Prostate gland (tissue), 2 donors: ENCODE measurements at regions of chr6 and their contacts with region 1.

Region 1: GRCh38 chr6:90296346-90297114 is at the start of gene BACH2:
- DNase-seq: peak; percentile 95
- H3K4me3 ChIP-seq: peak within 1 kb of the TSS; percentile 77 to 89
- H3K27ac ChIP-seq: peak within 1 kb of the TSS; percentile 88 to 92
- H3K4me1 ChIP-seq: no peaks in the 10 kb centered on the region
- H3K27me3 ChIP-seq: no peaks in the 10 kb centered on the region
- CTCF ChIP-seq: peak in 2 of 4 experiments; percentile 23 to 54
- POLR2A ChIP-seq: peak; percentile 73
- total RNA-seq, gene BACH2: 5.2 to 5.7 TPM

Region 2: DNA sequence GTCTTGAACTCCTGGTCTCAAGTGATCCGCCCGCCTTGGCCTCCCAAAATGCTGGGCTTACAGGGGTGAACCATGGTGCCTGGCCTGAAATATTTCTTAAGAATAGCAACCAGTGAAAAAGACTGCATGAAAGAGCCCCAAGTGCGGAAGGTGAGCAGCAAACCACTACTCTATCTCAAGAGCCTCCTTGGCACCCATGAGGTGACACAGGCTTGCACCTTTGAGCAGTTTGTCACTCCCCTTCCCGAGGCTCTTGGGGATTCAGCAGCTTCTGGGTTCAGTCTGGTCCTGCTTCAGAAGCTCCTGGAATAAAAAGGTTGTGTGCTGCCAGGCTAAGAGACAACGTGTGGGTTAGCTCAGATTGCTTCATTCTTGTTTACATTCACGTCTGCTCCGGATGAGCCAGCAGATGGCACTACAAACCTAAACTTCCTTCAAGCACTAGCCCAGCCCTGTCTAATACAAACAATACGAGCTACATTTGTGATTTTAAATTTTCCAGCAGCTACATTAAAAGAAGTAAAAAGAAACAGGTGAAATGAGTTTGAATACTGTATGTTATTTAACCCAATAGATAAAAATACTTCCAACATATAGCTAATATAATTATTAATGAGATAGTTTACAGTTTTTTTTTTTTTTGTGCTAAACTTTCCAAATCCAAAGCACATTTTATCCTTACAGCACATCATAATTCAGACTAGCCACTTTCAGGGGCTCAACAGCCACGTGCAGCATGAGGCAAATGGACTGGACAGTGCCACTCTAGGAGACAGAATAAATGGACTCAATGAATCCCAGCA is 356.1 kb before region 1 on chr6:
- intact Hi-C with region 1: loop called (anchors 10 kb)
- DNase-seq: peak; percentile 90
- H3K4me3 ChIP-seq: no peak overlapping the region
- H3K27ac ChIP-seq: peak overlapping the region; percentile 77 to 82
- H3K4me1 ChIP-seq: peaks cover 8% of the 10 kb centered on the region
- H3K27me3 ChIP-seq: no peaks in the 10 kb centered on the region
- CTCF ChIP-seq: peak; percentile 26 to 87 (median 74)
- POLR2A ChIP-seq: no peak

Region 3: DNA sequence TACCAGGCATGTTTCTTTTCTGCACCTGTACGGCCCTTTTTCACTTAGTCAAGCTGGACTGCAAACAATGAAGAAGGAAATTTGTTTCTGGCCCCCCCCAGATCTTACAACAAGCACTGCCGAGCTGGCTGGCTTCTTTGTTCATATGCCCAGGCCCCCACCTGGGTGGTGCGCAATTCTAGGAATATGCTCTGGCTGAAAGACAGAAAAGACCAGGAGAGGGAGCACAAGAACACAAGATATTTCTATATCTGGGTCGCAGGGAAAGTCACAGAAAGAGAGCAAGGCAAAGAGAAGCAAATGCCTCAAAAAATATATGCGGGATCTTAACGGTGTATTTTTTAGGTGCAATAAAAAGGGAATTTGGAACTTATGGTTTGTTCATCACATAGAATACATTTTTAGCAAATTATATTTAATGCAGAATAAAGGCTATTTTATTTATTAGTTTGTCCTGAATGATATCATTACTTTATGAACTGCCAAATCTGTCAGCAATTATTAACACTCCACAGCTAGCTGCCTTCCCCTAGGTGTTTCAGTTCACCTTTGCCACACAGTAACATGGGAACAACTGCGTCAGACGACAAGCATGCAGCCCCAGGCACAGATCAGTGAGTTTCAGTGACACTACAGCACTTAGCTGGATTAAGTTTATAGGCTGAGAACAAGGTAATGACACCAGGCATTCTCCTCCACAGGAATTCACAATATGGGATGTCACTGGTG is 325.8 kb before region 1 on chr6:
- intact Hi-C with region 1: loop called (anchors 2 kb)
- DNase-seq: peak; percentile 40
- H3K4me3 ChIP-seq: no peak overlapping the region
- H3K27ac ChIP-seq: no peak overlapping the region
- H3K4me1 ChIP-seq: no peaks in the 10 kb centered on the region
- H3K27me3 ChIP-seq: no peaks in the 10 kb centered on the region
- CTCF ChIP-seq: peak in 3 of 4 experiments; percentile 48 to 75 (median 73)
- POLR2A ChIP-seq: no peak

Region 4: GRCh38 chr6:90098001-90098531 is 198.5 kb before region 1 on chr6:
- intact Hi-C with region 1: loop called (anchors 5 kb)
- DNase-seq: peak; percentile 75
- H3K4me3 ChIP-seq: no peak overlapping the region
- H3K27ac ChIP-seq: peak overlapping the region; percentile 48 to 67
- H3K4me1 ChIP-seq: no peaks in the 10 kb centered on the region
- H3K27me3 ChIP-seq: no peaks in the 10 kb centered on the region
- CTCF ChIP-seq: peak in 3 of 4 experiments; percentile 15 to 46 (median 43)
- POLR2A ChIP-seq: no peak

Region 5: DNA sequence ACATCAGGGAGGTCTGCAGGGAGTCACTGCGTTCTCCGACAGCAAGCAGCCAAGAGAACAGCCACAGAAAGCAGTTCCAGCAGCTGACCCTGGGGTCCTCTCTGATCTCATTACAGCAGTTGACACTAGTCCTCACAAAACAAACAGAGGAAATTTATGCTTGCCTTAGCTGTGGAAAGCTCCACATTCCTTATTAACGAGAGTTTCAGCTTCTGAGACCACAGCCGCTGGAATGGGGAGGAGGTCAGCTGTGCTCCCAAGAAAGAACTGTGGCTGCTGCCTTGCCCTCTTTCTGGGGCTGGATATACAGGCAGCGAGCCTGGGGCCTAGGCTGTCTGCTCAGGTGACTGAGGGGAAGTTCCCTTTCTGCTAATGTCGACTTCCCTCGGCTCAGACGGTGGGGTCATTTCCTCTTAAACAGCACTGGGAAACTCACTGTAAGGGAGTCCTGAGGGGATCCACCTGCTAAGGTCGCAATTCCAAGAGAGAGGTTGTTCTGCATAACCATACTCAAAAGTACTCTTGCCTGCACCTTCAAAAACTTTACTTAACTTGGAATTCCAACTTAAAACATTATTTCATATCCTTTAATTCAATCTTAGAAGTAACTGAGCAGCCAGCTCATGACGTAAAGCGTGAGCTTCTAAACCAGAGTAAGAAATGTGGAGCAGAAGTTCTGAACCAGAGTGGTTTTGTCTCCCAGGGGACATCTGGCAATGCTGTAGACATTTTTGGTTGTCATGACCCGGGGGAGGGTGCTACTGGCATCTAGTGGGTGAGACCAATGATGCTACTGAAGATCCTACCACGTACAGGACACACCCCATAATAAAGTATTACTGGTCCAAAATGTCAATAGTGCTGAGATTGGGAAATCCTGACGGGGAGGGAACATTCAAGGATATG is 80.2 kb before region 1 on chr6:
- intact Hi-C with region 1: loop called (anchors 5 kb)
- DNase-seq: no peak
- H3K4me3 ChIP-seq: no peak overlapping the region
- H3K27ac ChIP-seq: peak overlapping the region; percentile 61 to 94
- H3K4me1 ChIP-seq: peaks cover 19% of the 10 kb centered on the region
- H3K27me3 ChIP-seq: no peaks in the 10 kb centered on the region
- CTCF ChIP-seq: no peak
- POLR2A ChIP-seq: no peak

Region 6: GRCh38 chr6:90369024-90369519 is 72.5 kb after region 1 on chr6:
- intact Hi-C with region 1: loop called (anchors 5 kb)
- DNase-seq: peak; percentile 91
- H3K4me3 ChIP-seq: no peak overlapping the region
- H3K27ac ChIP-seq: peak overlapping the region; percentile 74 to 76
- H3K4me1 ChIP-seq: no peaks in the 10 kb centered on the region
- H3K27me3 ChIP-seq: no peaks in the 10 kb centered on the region
- CTCF ChIP-seq: no peak
- POLR2A ChIP-seq: no peak

Region 7: DNA sequence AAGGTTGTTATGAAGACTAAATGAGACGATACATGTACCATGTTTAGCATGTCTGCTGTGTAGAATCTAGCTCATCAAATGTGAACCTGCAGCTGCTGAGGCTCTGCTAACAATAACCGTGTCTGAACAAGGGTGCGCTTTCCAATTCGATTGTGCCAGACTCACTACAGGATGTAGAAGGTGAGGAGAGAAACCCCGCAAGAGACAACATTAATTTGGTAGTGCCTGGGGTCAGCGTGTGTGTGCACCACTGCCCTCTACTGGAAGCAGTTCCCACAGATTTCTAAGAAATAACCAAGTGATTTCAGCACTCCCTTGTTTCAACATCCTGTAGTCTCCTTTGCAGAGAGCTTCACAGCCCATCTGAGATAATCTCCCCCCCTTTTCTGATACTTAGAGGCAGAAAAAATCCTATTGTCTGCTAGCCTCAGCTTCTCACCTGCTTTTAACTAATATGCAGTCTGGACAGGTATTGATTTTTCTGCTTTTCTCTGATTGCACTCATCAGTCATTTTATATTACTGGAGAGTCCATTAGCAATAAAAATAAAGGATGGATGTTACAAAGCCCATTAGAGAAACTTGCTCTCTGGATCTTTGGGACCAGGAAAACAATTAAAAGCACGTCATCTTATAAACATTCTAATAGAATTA is 96.8 kb after region 1 on chr6:
- intact Hi-C with region 1: loop called (anchors 5 kb)
- DNase-seq: peak; percentile 63
- H3K4me3 ChIP-seq: no peak overlapping the region
- H3K27ac ChIP-seq: no peak overlapping the region
- H3K4me1 ChIP-seq: no peaks in the 10 kb centered on the region
- H3K27me3 ChIP-seq: no peaks in the 10 kb centered on the region
- CTCF ChIP-seq: peak; percentile 53 to 77 (median 72)
- POLR2A ChIP-seq: no peak